Panc1 (cell line): ENCODE measurements at regions of chr20 and their contacts with region 1.

Region 1: DNA sequence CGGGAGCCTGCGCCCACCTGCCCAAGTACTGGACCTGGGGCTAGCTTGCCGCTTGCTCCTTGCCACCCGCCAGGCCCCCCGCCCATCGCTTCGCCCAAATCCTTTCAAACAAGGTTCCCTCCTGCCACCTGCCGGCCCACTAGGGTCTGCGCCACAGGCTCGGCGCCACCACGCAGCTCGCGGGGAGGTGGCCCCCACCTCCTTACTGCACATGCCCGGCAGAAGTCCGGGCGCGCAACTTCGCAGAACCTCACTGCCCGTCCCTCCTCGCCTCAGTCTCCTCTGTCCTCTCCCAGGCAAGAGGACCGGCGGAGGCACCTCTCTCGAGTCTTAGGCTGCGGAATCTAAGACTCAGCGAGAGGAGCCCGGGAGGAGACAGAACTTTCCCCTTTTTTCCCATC is 11.2 kb downstream of the GNAS-AS1 start:
- DNase-seq: no peak
- ATAC-seq: peak; percentile 88
- H3K4me3 ChIP-seq: peak overlapping the region; percentile 36 to 55
- H3K27ac ChIP-seq: no peak overlapping the region
- H3K4me1 ChIP-seq: peaks cover 18% of the 10 kb centered on the region
- H3K27me3 ChIP-seq: peaks cover 45% of the 10 kb centered on the region
- CTCF ChIP-seq: peak; percentile 85

Region 2: DNA sequence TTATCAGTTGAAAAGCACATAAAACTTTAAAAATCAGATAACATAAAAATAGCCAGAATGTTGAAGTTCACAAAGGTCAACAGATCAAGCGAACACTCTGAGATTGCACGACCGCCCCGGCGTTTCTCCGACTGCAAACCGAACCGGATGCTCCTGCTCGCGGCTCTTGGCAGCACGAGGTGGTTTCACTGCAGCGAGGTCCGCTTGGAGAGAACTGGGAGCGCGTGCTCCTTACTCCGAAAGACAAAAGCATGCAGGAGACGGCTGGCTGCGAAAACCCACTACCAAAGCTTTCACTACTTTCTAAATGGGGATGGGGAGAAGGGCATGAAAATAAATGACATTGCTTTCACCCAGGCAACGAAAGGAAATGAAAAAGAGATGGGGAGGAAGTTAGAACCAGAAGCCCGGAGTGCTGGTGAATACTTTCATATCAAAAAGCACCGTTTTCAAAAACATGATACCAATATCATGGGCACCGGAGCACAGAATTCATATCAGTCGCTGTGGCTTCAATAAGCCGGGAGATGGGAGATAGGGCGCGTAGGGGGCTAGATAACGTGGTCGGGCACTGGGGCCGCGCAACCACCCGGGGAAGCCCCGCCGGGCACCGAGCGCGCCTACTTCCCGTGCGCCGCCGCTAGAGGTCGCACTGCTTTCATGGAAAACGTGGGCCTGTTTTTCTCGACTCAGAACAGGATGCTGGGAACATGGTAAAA is 602.7 kb before region 1 on chr20:
- CTCF ChIA-PET with region 1: interaction called, 5 read pairs
- POLR2A ChIA-PET with region 1: no interaction called
- in situ Hi-C with region 1: no loop called
- intact Hi-C with region 1: loop called (anchors 5 kb)
- DNase-seq: peak; percentile 47
- ATAC-seq: peak; percentile 95
- H3K4me3 ChIP-seq: peak overlapping the region; percentile 47 to 69
- H3K27ac ChIP-seq: peak overlapping the region; percentile 67
- H3K4me1 ChIP-seq: peaks cover 6% of the 10 kb centered on the region
- H3K27me3 ChIP-seq: no peaks in the 10 kb centered on the region
- CTCF ChIP-seq: peak; percentile 97